ENCODE measurements at regions of chr1 and their contacts with region 1.

Region 1: GRCh38 chr1:19582302-19582701 is 61.8 kb upstream of the NBL1 start:
- DNase-seq: peak; percentile 82
- ATAC-seq: peak; percentile 99
- H3K4me3 Mint-ChIP-seq: no peak overlapping the region
- H3K27ac Mint-ChIP-seq: no peak overlapping the region
- H3K4me1 Mint-ChIP-seq: peaks cover 10% of the 10 kb centered on the region
- H3K27me3 Mint-ChIP-seq: peaks cover 7% of the 10 kb centered on the region

Region 2: GRCh38 chr1:19344372-19345230 is 237.7 kb before region 1 on chr1:
- CTCF ChIA-PET with region 1: interaction called, 19 read pairs
- POLR2A ChIA-PET with region 1: no interaction called
- DNase-seq: peak; percentile 45
- ATAC-seq: peak; percentile 56
- H3K4me3 Mint-ChIP-seq: no peak overlapping the region
- H3K27ac Mint-ChIP-seq: peak overlapping the region; percentile 57
- H3K4me1 Mint-ChIP-seq: no peaks in the 10 kb centered on the region
- H3K27me3 Mint-ChIP-seq: no peaks in the 10 kb centered on the region

Region 3: GRCh38 chr1:19390901-19391595 is 191.3 kb before region 1 on chr1:
- CTCF ChIA-PET with region 1: interaction called, 32 read pairs
- POLR2A ChIA-PET with region 1: no interaction called
- DNase-seq: peak; percentile 79
- ATAC-seq: peak; percentile 77
- H3K4me3 Mint-ChIP-seq: peak overlapping the region; percentile 79
- H3K27ac Mint-ChIP-seq: peak overlapping the region; percentile 95
- H3K4me1 Mint-ChIP-seq: peaks cover 76% of the 10 kb centered on the region
- H3K27me3 Mint-ChIP-seq: no peaks in the 10 kb centered on the region

Region 4: DNA sequence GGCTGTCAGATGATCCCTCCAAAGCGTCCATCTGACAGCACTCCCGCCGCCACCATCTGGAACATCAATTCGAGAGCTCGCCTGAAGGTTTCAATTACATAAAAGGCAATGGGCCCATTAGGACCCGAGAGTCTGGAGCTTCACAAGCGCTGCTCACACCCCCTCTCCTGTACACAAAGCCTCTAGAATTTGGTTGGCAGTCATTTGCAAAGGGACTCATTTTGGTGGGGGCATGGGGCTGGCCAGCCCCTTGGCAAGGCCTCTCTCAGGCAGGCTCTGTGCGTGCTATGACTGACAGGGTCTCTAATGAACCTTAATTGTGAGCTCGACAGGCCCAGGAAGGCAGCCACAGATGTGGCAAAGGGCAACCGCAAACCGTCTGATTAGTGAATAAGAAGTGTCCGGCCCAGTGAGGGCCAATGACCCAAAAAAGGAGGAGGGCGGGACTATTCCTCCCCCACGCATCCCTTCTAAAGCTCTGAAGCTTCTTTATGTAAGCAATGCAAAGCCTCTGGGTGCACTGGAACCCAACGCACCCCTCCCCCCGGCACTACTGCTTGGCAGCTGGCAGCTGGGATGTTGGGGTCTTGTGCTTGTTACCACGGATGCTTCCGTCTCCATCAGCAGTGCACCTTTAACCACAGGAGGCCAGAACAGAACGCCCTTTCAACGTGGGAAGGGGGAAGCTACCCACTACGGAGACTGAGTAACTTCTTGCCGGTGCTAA is 176.4 kb before region 1 on chr1:
- CTCF ChIA-PET with region 1: interaction called, 10 read pairs
- POLR2A ChIA-PET with region 1: no interaction called
- DNase-seq: peak; percentile 27
- ATAC-seq: peak; percentile 40
- H3K4me3 Mint-ChIP-seq: no peak overlapping the region
- H3K27ac Mint-ChIP-seq: peak overlapping the region; percentile 39
- H3K4me1 Mint-ChIP-seq: peaks cover 32% of the 10 kb centered on the region
- H3K27me3 Mint-ChIP-seq: no peaks in the 10 kb centered on the region

Region 5: DNA sequence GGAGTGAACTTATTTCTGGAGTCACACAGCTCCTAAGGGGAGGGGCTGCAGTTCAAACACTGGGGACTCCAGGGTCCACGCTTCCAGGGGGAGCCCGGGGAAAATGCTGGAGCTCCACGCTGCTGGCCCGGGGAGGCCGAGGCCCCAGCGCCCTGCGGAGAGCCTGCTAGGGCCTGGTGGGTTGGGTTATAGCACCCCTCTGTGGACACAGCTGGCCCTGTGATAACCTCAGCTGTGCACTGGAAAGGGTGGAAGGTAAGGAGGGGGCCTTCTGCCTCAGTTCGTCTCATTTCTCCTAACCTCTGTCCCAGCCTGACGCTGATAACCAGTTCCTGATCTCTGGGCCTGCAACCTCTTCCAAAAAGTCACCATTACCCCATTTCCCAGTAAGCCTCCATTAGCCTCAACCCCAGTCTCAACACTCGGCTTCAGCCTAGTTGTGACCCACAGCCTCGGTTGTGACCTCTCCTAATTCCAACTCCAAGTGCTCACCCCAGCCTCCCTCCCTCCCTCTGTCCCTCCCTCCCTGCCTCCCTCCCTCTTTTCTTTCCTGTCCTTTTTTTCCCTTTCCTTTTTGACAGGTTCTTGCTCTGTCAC is 68.9 kb after region 1 on chr1:
- CTCF ChIA-PET with region 1: interaction called, 10 read pairs
- POLR2A ChIA-PET with region 1: no interaction called
- DNase-seq: peak; percentile 59
- ATAC-seq: peak; percentile 59
- H3K4me3 Mint-ChIP-seq: no peak overlapping the region
- H3K27ac Mint-ChIP-seq: peak overlapping the region; percentile 22
- H3K4me1 Mint-ChIP-seq: peaks cover 26% of the 10 kb centered on the region
- H3K27me3 Mint-ChIP-seq: no peaks in the 10 kb centered on the region